Mammary epithelial cell (primary cell): ENCODE measurements at regions of chr20 and their contacts with region 1.

Region 1: GRCh38 chr20:13009682-13010406 is 1.1 kb downstream of the SPTLC3 start:
- DNase-seq: peak; percentile 85
- H3K4me3 ChIP-seq: peak overlapping the region; percentile 47 to 70 (median 53)
- H3K27ac ChIP-seq: peak overlapping the region; percentile 85
- H3K4me1 ChIP-seq: peaks cover 33% of the 10 kb centered on the region
- H3K27me3 ChIP-seq: no peaks in the 10 kb centered on the region
- CTCF ChIP-seq: no peak

Region 2: DNA sequence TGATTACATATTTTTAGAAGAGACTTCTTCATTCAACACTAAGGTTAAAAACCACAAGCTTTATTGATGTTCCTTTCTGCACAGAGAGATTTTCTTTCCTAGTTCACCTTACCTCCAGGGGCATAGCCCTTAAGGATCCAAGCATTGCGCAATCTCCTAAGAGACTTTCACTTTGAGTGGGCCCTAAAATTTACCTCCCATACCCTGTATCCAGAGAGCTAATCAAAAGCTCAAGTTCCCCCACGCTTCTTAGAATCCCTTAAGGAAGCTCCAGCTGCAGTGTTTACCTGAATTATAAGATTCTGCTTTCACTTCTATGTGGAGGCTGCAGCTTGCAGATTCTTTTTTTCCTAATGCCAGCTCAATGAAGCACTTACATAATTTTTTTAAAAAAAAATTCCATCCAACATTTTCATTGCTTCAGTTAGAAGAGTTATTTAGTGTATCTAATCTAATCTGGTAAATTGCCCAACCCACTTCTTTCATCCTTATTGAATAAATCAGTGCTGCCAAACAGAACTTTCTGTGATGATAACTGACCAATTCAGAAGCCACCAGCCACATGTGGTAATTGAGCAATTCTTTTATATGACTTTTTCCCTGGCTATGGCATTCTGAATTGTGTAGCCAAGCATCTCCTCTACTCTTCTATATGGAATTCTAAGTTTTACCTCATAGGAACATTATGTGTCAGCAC is 25.6 kb before region 1 on chr20:
- CTCF ChIA-PET with region 1: no interaction called
- dilution Hi-C with region 1: no loop called
- in situ Hi-C with region 1: no loop called
- intact Hi-C with region 1: loop called (anchors 1 kb)
- DNase-seq: no peak
- H3K4me3 ChIP-seq: peak overlapping the region in 1 of 3 experiments; percentile 10
- H3K27ac ChIP-seq: peak overlapping the region; percentile 38
- H3K4me1 ChIP-seq: peaks cover 19% of the 10 kb centered on the region
- H3K27me3 ChIP-seq: no peaks in the 10 kb centered on the region
- CTCF ChIP-seq: no peak

Region 3: DNA sequence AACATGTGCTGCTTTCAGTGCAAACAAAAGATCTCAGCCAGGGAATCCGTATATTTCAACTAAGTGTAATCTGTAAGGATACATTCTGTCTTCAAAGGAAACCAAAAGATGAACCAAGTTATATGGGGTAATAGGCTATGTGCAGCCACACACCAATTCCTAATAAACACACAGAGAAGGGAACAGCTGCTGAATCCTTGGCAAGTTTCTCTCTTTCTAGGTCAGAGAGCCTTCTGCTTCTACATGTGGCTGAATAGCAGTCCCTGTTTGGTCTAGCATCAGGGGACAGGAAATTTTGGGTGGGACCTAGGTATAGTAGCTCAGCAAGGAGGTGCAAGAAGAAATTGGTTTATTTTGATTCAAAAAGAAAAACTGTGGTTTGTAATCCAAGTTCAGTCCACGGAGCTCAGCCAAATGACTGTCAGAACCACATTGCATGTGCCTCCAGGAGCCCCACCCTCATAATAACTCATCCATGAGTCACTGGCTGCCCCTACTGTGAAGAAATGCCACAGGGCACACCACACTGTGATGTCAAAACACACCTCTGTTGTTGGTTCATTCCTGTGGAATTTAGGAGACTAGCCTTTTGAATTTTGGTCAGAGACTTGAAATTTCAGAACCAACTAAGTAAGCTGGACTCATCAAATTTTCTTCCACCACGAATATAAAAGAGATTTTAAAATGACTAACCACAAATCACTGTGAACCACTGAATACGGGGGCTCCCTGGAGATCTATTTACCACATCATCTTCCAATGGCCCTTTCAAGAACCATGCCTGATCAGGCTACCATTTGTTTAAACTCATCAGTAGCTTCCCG is 20.1 kb after region 1 on chr20:
- CTCF ChIA-PET with region 1: no interaction called
- dilution Hi-C with region 1: no loop called
- in situ Hi-C with region 1: no loop called
- intact Hi-C with region 1: loop called (anchors 1 kb)
- DNase-seq: peak; percentile 95
- H3K4me3 ChIP-seq: peak overlapping the region in 1 of 3 experiments; percentile 5
- H3K27ac ChIP-seq: peak overlapping the region; percentile 86
- H3K4me1 ChIP-seq: peaks cover 56% of the 10 kb centered on the region
- H3K27me3 ChIP-seq: no peaks in the 10 kb centered on the region
- CTCF ChIP-seq: no peak

Region 4: GRCh38 chr20:13105864-13106457 is 96.1 kb after region 1 on chr20:
- CTCF ChIA-PET with region 1: no interaction called
- dilution Hi-C with region 1: no loop called
- in situ Hi-C with region 1: no loop called
- intact Hi-C with region 1: loop called (anchors 1 kb)
- DNase-seq: peak; percentile 12
- H3K4me3 ChIP-seq: no peak overlapping the region
- H3K27ac ChIP-seq: no peak overlapping the region
- H3K4me1 ChIP-seq: peaks cover 3% of the 10 kb centered on the region
- H3K27me3 ChIP-seq: no peaks in the 10 kb centered on the region
- CTCF ChIP-seq: peak; percentile 62 to 65

Region 5: DNA sequence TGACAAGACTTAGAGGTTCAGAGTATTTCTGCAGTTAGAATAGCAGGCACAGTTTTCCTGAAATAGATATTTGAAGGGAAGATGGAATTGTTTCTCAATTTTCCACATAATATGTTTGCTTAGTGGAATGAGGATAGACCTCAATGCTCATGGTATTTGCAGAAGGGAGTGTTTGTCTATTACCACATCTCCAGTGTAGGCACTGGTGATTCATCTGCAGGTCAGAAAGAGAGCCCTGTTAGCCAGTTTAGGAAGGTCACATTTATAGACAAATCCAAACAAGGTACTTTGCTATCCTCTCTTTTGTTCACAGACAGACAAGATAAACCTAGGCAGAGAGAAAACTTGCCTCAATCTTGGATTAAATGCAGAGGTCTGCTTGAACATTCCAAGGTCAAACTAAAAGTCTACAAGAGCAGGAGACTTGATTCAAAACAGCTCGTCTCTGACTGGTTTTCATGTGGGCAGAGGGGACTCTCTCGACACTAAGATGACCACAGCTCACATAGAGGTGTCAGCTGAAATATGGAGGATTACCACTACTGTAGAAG is 234.1 kb after region 1 on chr20:
- CTCF ChIA-PET with region 1: no interaction called
- dilution Hi-C with region 1: no loop called
- in situ Hi-C with region 1: no loop called
- intact Hi-C with region 1: loop called (anchors 10 kb)
- DNase-seq: peak; percentile 66
- H3K4me3 ChIP-seq: no peak overlapping the region
- H3K27ac ChIP-seq: no peak overlapping the region
- H3K4me1 ChIP-seq: peaks cover 37% of the 10 kb centered on the region
- H3K27me3 ChIP-seq: no peaks in the 10 kb centered on the region
- CTCF ChIP-seq: no peak